Activated CD8-positive, alpha-beta T cell treated with anti-CD3 and anti-CD28 coated beads for 36 hours (primary cell): ENCODE measurements at regions of chr6 and their contacts with region 1.

Region 1: DNA sequence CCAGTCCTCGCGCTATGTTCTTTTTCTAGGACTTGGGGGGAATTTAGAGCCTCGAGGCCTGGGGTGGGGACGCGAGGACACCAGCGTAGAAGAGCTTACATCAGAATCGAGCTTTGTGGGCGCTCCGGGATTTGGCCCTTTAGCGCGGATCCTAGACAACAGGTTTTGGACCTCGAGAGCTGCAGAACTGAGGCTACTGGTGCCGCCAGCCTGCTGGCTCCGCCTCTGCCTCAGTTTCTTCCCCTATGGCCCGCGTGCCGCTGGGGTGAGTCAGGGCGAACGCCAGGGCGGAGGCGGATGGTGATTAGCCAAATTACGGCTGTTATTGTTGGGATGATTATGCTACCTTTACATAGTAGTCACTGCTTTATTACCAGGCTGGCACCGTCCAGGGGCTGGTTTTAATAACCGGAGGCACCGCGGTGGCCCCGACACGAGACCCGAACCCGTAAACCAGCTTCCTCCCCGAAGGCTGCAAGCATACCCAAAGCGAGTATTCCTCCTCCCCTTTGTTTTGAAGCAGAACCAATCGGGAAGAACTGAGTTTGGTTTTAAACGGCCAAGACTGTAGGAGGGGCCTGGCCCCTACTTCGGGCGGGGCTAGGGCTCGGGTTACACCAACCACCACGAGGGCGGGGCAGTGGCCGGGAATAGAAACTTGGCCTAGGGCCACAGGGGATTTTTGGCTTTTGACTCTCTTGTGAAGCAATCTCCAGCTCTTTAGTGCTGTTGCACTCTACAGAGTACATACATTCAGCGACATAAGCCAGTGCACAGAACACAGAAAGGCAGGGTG is 639 bp upstream of the GTPBP2 start:
- DNase-seq: peak; percentile 97
- ATAC-seq: peak; percentile 76
- H3K4me3 Mint-ChIP-seq: peak overlapping the region; percentile 98
- H3K27ac Mint-ChIP-seq: peak overlapping the region; percentile 100
- H3K4me1 Mint-ChIP-seq: peaks cover 24% of the 10 kb centered on the region
- H3K27me3 Mint-ChIP-seq: no peaks in the 10 kb centered on the region
- CTCF ChIP-seq: no peak

Region 2: DNA sequence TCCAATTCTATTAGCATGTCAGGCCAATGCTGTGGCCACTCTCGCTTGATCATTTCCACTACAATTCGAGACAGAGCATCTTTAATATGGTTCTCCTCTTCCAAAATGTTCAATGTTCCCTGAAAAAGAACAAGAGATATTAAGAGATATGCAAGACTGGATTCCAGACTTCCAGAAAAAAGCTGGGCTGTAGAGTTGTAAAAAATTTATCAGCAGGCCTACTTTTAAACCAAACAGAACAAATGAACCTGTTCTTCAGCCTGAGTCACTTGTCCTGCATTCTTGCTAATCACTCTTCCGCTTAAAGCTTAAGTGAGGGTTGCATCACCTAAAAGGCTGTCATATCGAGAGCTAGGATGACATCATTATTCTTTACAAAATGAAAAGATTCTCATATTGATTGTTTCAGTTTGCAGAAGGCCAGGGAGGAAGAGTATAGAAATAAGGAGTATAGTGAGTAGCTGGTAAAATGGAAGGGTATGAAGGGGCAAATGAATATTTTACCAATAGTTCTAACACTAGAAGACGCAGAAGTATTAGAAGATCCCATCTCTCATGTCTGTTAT is 58.7 kb before region 1 on chr6:
- CTCF ChIA-PET with region 1: no interaction called
- POLR2A ChIA-PET with region 1: interaction called, 10 read pairs
- intact Hi-C with region 1: no loop called
- DNase-seq: peak; percentile 10
- ATAC-seq: peak; percentile 45
- H3K4me3 Mint-ChIP-seq: no peak overlapping the region
- H3K27ac Mint-ChIP-seq: peak overlapping the region; percentile 90
- H3K4me1 Mint-ChIP-seq: peaks cover 26% of the 10 kb centered on the region
- H3K27me3 Mint-ChIP-seq: no peaks in the 10 kb centered on the region
- CTCF ChIP-seq: no peak

Region 3: DNA sequence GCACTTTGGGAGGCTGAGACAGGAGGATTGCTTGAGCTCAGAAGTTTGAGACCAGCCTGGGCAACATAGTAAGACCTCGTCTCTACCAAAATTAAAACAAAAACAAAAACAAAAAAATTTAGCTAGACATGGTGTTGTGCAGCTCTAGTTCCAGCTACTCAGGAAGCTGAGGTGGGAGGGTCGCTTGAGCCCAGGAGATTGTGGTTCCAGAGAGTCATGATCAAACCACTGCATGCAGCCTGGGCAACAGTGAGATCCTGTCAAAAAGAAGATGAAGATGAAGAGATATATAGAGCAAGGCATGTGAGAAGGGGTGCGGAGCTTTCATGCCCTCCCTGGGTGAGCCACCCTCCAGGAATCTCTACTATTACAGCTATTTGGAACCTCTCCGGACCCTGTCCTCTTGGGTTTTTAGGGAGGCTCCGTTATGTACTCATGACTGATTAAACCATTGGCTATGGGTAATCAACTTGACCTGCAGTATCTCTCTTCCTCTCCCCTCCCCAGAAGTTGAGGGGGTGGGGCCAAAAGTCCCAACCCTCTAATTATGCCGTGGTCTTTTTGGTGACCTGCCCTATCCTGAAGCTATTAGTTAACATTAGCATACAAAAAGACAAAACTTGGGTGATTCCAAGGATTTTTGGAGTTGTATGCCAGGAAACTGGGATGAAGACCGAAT is 44.7 kb before region 1 on chr6:
- CTCF ChIA-PET with region 1: no interaction called
- POLR2A ChIA-PET with region 1: no interaction called
- intact Hi-C with region 1: no loop called
- DNase-seq: peak; percentile 18
- ATAC-seq: peak; percentile 53
- H3K4me3 Mint-ChIP-seq: no peak overlapping the region
- H3K27ac Mint-ChIP-seq: peak overlapping the region; percentile 47
- H3K4me1 Mint-ChIP-seq: peaks cover 25% of the 10 kb centered on the region
- H3K27me3 Mint-ChIP-seq: no peaks in the 10 kb centered on the region
- CTCF ChIP-seq: no peak